ENCODE measurements at regions of chr7 and their contacts with region 1.

Region 1: DNA sequence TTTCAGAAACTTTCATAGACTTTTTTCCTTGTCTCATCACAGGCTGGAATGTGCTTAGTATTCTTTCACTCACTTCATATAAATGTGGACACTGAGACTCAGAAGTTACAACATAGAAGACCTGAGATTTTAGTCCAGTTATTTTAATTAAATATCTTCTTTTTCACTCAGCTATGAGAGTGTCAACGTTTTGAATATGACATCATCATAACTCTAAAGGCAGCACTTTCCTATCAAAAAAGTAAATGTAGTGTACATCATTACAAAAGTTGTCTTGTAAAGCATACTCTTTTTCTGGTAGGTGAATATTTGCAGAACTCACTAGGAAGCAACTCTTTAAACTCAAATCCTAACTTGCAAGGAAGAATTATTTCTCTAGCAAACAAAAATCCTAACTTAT is 291.9 kb upstream of the GNAI1 start:
- DNase-seq: no peak
- H3K4me3 ChIP-seq: no peak overlapping the region
- H3K27ac ChIP-seq: no peak overlapping the region
- H3K27me3 ChIP-seq: no peaks in the 10 kb centered on the region
- CTCF ChIP-seq: no peak

Region 2: GRCh38 chr7:78677391-78677790 is 1165.3 kb before region 1 on chr7:
- CTCF ChIA-PET with region 1: interaction called, 10 read pairs
- POLR2A ChIA-PET with region 1: no interaction called
- DNase-seq: no peak
- H3K4me3 ChIP-seq: no peak overlapping the region
- H3K27ac ChIP-seq: no peak overlapping the region
- H3K27me3 ChIP-seq: no peaks in the 10 kb centered on the region
- CTCF ChIP-seq: no peak

Region 3: GRCh38 chr7:79199961-79200360 is 642.7 kb before region 1 on chr7:
- CTCF ChIA-PET with region 1: no interaction called
- POLR2A ChIA-PET with region 1: no interaction called
- DNase-seq: peak; percentile 29
- H3K4me3 ChIP-seq: no peak overlapping the region
- H3K27ac ChIP-seq: no peak overlapping the region
- H3K27me3 ChIP-seq: no peaks in the 10 kb centered on the region
- CTCF ChIP-seq: no peak

Region 4: DNA sequence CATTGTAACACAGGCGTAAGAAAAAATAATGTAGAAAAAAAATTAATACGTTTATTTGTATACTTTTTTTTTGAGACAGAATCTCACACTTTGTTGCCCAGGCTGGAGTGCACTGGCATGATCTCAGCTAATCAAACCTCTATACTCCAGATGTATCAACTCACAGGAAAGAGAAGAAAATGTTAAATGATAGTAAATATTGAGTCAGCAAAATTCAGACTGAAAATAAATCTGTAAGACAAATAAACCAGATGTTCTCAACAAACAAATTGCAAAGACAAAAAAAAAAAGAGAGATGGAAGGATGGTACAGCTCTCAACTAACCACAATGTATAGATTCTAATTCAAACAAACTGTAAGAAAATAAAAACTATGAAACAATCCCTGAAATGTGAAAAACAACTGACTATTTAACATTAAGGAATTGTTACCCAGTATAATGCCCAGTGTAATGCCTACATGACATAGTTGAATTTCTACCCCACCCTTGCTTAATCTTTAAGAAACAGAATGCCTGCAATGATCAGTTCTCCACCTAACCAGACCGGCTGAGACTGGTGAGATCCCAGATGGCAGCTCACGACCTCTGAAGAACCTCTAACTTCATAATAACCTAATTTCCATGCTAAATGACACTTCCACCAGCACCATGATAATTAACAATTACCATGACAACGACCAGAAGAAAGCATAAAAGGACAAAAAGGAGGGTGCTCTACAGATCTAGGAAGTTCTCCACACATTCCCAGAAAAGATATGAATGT is 19.9 kb after region 1 on chr7:
- CTCF ChIA-PET with region 1: no interaction called
- POLR2A ChIA-PET with region 1: no interaction called
- DNase-seq: no peak
- H3K4me3 ChIP-seq: no peak overlapping the region
- H3K27ac ChIP-seq: no peak overlapping the region
- H3K27me3 ChIP-seq: no peaks in the 10 kb centered on the region
- CTCF ChIP-seq: no peak